T-cell (primary cell): ENCODE measurements at regions of chr9 and their contacts with region 1.

Region 1: GRCh38 chr9:125284855-125285254 is 23.2 kb downstream of the GAPVD1 start:
- DNase-seq: no peak
- ATAC-seq: no peak
- H3K4me3 ChIP-seq: no peak overlapping the region
- H3K4me3 Mint-ChIP-seq: no peak overlapping the region
- H3K27ac ChIP-seq: no peak overlapping the region
- H3K27ac Mint-ChIP-seq: no peak overlapping the region
- H3K4me1 ChIP-seq: no peaks in the 10 kb centered on the region
- H3K4me1 Mint-ChIP-seq: peaks cover 9 to 18% (median 14%) of the 10 kb centered on the region in 3 donors
- H3K27me3 ChIP-seq: no peaks in the 10 kb centered on the region
- H3K27me3 Mint-ChIP-seq: no peaks in the 10 kb centered on the region

Region 2: DNA sequence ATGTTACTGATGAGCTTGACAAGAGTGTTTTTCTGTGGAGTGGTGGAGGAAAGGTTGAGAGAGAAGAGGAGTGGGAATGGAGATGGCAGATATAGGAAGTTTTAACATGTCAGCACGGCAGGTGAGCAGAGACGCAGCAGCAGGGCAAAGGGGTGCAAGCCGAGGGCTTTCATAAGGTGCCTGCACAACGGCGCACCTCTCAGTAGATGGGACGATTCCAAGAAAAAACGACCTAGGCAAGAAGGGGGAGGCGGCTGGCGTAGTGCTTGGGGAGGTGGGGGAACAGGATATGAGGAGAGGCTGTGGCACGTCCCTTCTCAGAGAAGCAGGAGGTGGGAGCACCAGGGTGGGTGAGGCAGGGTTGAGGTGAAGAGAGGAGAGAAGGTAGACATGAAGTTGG is 398.4 kb before region 1 on chr9:
- CTCF ChIA-PET with region 1: no interaction called
- POLR2A ChIA-PET with region 1: interaction called in 1 of 2 experiments, 18 read pairs
- DNase-seq: no peak
- ATAC-seq: no peak
- H3K4me3 ChIP-seq: no peak overlapping the region
- H3K4me3 Mint-ChIP-seq: no peak overlapping the region
- H3K27ac ChIP-seq: no peak overlapping the region
- H3K27ac Mint-ChIP-seq: no peak overlapping the region
- H3K4me1 ChIP-seq: peaks cover 0 to 2% of the 10 kb centered on the region in 2 experiments
- H3K4me1 Mint-ChIP-seq: no peaks in the 10 kb centered on the region
- H3K27me3 ChIP-seq: peaks cover 0 to 18% of the 10 kb centered on the region in 2 experiments
- H3K27me3 Mint-ChIP-seq: no peaks in the 10 kb centered on the region